Gastrocnemius medialis (tissue), 4 donors: ENCODE measurements at regions of chr11 and their contacts with region 1.

Region 1: DNA sequence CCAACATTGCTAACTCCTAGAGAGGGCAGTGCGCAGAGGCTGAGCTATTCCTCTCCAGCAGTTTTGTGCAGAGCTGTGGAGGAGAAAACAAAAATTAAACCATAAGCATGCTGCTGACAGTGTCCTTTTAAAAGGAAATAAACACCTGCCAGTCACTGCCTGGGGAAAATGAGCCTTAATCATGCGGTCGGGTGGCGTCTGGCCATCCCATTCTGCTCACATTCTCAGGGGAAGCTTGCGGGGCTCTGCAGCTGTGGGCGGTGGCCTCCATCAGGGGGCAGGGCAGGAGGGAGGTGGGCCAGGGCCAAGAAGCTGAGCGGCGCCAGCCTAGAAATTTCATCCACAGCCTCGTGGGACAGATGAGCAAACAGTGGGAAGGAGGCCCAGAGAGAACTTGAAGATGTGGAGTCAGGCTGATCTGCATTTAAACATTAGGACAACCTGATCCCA is 71.0 kb upstream of the TP53I11 start:
- DNase-seq: peak; percentile 89 to 94
- ATAC-seq: peak; percentile 84 to 89
- H3K4me3 ChIP-seq: no peak overlapping the region
- H3K27ac ChIP-seq: peak overlapping the region; percentile 70 to 91 (median 80)
- H3K4me1 ChIP-seq: peaks cover 26 to 29% of the 10 kb centered on the region in 2 donors
- H3K27me3 ChIP-seq: no peaks in the 10 kb centered on the region
- CTCF ChIP-seq: peak in 1 of 5 experiments; percentile 20
- POLR2A ChIP-seq: no peak

Region 2: DNA sequence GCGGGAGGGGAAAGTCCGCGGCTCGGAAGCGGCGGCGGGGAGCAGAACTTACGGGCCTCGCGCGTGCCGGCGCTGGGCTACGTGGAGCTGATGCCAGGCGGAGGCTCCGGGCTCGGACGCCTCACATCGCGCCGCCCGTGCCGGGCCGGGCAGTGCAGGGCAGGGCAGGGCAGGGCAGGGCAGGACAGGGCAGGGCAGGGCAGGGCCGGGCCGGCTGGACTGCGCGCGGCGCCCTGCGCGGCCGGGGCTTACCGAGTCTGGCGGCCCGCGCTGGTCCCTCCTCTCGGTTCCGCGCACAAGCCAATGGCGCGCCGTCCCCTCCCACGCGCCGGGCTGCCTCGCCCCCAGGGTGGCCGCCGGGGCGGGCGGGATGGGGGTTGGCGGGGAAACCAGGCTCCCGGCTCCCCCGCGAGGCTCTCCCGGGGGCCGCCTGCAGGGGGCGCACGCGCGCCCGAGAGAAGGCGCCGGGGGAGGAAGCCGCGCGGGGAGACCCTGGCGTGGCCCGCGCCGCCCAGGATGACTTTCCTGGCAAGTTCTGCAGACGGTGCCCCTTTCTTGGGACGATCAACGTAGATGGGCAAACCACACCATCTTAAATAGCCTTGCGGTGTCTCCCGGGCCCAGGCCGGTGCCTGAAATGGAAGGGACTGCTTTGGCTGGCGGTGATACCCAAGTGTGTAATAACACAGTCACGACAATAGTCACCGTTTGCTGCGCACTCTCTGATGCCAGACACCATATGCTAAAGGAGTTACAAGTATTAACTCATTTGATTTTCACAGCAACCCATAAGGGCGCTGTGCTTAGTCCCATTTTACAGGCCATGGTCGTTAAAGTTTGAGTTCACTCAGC is 70.9 kb before region 1 on chr11 and contains the start of gene TP53I11:
- in situ Hi-C with region 1: no loop called
- intact Hi-C with region 1: loop called (anchors 2 kb)
- DNase-seq: peak; percentile 37 to 67
- ATAC-seq: peak; percentile 54 to 66
- H3K4me3 ChIP-seq: peak within 1 kb of the TSS; percentile 55 to 85 (median 76)
- H3K27ac ChIP-seq: peak within 1 kb of the TSS; percentile 72 to 82 (median 78)
- H3K4me1 ChIP-seq: peaks cover 8 to 17% of the 10 kb centered on the region in 2 donors
- H3K27me3 ChIP-seq: no peaks in the 10 kb centered on the region
- CTCF ChIP-seq: peak; percentile 26 to 74 (median 68)
- POLR2A ChIP-seq: peak; percentile 63 to 81
- total RNA-seq, gene TP53I11: 5.4 to 17.2 (median 12.8) TPM

Region 3: DNA sequence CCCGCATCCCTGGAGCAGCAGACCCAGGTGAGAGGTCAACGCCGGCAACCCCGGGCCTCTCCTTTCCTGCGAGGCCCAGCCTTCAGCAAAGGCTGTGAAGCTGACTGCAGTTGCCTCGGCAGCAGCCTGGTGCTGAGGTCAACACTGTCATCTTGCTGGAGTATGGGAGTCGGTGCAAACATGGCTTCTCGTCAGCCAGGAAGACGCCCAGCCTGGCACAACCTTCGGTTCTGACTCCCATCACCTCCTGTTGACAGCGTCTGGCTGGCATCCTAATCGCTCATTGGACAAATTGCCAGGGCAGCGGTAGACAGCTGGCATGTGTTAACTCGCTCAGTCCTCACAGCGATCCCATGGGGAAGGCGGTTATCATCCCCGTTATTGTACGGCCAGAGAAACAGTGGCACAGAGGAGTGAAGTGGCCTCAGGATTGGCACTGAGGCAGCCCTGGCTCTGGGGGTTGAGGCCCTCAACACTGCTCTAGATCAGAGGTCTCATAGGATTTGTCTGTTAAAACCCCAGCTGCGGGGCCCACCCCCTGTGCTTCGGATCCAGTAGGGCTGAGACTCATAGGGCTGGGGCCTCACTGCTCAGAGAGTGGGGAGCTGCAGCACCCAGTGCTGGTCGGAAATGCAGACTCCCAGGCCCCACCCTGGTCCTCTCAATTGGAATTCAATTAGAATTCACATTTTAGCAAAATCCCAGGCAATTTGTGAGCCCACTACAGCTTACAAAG is 31.7 kb before region 1 on chr11:
- in situ Hi-C with region 1: no loop called
- intact Hi-C with region 1: loop called (anchors 2 kb)
- DNase-seq: peak; percentile 15 to 60
- ATAC-seq: peak; percentile 28 to 37
- H3K4me3 ChIP-seq: no peak overlapping the region
- H3K27ac ChIP-seq: no peak overlapping the region
- H3K4me1 ChIP-seq: peaks cover 19 to 24% of the 10 kb centered on the region in 2 donors
- H3K27me3 ChIP-seq: no peaks in the 10 kb centered on the region
- CTCF ChIP-seq: no peak
- POLR2A ChIP-seq: no peak

Region 4: GRCh38 chr11:45089676-45090499 is 68.2 kb after region 1 on chr11:
- in situ Hi-C with region 1: loop called in 1 of 4 experiments (anchors 5 kb)
- intact Hi-C with region 1: loop called (anchors 1 kb)
- DNase-seq: no peak
- ATAC-seq: no peak
- H3K4me3 ChIP-seq: no peak overlapping the region
- H3K27ac ChIP-seq: peak overlapping the region; percentile 63 to 80 (median 72)
- H3K4me1 ChIP-seq: peaks cover 20 to 23% of the 10 kb centered on the region in 2 donors
- H3K27me3 ChIP-seq: no peaks in the 10 kb centered on the region
- CTCF ChIP-seq: no peak
- POLR2A ChIP-seq: no peak